CD4-positive, alpha-beta T cell (primary cell): ENCODE measurements at regions of chr19 and their contacts with region 1.

Region 1: DNA sequence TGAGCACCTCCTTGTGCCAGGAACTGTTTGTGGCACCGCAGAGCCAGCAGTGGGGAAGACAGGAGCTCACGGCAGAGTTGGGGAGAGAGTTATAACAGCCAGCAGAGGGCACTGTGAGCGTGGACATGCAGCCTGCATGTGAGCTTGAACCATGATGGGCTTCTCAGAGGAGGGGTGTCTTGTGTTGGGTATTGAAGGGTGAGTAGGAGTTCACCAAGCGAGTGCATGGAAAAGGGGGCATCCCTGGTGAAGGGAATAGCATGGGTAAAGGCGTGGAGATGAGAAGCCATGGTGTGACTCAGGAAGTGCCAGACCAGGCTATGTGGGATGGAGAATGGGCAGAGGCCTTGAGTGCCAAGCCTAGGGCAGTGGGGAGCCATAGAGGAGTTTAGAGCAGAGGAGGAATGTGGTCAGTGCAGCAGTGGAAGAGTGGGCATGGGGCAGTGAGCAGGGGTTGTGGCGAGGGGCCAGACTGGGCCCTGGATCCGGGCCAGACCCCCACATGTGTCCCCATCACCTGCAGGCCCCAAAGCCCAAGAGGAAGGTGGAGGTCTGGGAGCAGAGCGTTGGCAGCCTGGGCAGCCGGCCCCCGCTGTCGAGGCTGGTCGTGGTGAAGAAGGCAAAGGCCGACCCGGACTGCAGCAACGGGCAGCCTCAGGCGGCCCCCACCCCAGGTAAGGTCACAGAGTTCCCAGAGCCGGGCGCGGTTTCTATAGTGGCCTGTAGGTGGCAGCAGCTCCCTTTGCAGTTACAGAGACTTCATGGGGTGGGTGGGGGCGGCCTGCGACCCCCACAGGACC is 11.8 kb upstream of the SHD start:
- DNase-seq: peak; percentile 44 to 75 (median 56)
- ATAC-seq: peak; percentile 70
- H3K4me3 ChIP-seq: no peak overlapping the region
- H3K4me3 Mint-ChIP-seq: no peak overlapping the region
- H3K27ac ChIP-seq: no peak overlapping the region
- H3K27ac Mint-ChIP-seq: no peak overlapping the region
- H3K4me1 ChIP-seq: peaks cover 20% of the 10 kb centered on the region
- H3K4me1 Mint-ChIP-seq: peaks cover 18% of the 10 kb centered on the region
- H3K27me3 ChIP-seq: no peaks in the 10 kb centered on the region
- H3K27me3 Mint-ChIP-seq: no peaks in the 10 kb centered on the region
- CTCF ChIP-seq: peak; percentile 79

Region 2: GRCh38 chr19:4197625-4198466 is 69.5 kb before region 1 on chr19:
- CTCF ChIA-PET with region 1: no interaction called
- POLR2A ChIA-PET with region 1: no interaction called
- intact Hi-C with region 1: no loop called
- DNase-seq: no peak
- ATAC-seq: peak; percentile 21
- H3K4me3 ChIP-seq: no peak overlapping the region
- H3K4me3 Mint-ChIP-seq: peak overlapping the region; percentile 7
- H3K27ac ChIP-seq: no peak overlapping the region
- H3K27ac Mint-ChIP-seq: no peak overlapping the region
- H3K4me1 ChIP-seq: peaks cover 5% of the 10 kb centered on the region
- H3K4me1 Mint-ChIP-seq: peaks cover 10% of the 10 kb centered on the region
- H3K27me3 ChIP-seq: peaks cover 41 to 43% of the 10 kb centered on the region in 2 experiments
- H3K27me3 Mint-ChIP-seq: peaks cover 69% of the 10 kb centered on the region
- CTCF ChIP-seq: no peak

Region 3: GRCh38 chr19:4524808-4525562 is 257.7 kb after region 1 on chr19:
- CTCF ChIA-PET with region 1: interaction called, 7 read pairs
- POLR2A ChIA-PET with region 1: no interaction called
- intact Hi-C with region 1: loop called (anchors 2 kb)
- DNase-seq: peak; percentile 49 to 77 (median 62)
- ATAC-seq: peak; percentile 78
- H3K4me3 ChIP-seq: no peak overlapping the region
- H3K4me3 Mint-ChIP-seq: no peak overlapping the region
- H3K27ac ChIP-seq: no peak overlapping the region
- H3K27ac Mint-ChIP-seq: no peak overlapping the region
- H3K4me1 ChIP-seq: no peaks in the 10 kb centered on the region
- H3K4me1 Mint-ChIP-seq: no peaks in the 10 kb centered on the region
- H3K27me3 ChIP-seq: no peaks in the 10 kb centered on the region
- H3K27me3 Mint-ChIP-seq: no peaks in the 10 kb centered on the region
- CTCF ChIP-seq: peak; percentile 47